Activated CD4-positive, alpha-beta memory T cell treated with anti-CD3 and anti-CD28 coated beads, Interleukin-2, amount 10 ng/mL, durations not matched to agents 7 days and 5 days (primary cell): ENCODE measurements at regions of chr18 and their contacts with region 1.

Region 1: GRCh38 chr18:58117786-58118403 is 73.9 kb downstream of the NEDD4L start:
- DNase-seq: no peak
- H3K4me3 Mint-ChIP-seq: no peak overlapping the region
- H3K27ac Mint-ChIP-seq: no peak overlapping the region
- H3K4me1 Mint-ChIP-seq: peaks cover 5% of the 10 kb centered on the region
- H3K27me3 Mint-ChIP-seq: peaks cover 2% of the 10 kb centered on the region

Region 2: DNA sequence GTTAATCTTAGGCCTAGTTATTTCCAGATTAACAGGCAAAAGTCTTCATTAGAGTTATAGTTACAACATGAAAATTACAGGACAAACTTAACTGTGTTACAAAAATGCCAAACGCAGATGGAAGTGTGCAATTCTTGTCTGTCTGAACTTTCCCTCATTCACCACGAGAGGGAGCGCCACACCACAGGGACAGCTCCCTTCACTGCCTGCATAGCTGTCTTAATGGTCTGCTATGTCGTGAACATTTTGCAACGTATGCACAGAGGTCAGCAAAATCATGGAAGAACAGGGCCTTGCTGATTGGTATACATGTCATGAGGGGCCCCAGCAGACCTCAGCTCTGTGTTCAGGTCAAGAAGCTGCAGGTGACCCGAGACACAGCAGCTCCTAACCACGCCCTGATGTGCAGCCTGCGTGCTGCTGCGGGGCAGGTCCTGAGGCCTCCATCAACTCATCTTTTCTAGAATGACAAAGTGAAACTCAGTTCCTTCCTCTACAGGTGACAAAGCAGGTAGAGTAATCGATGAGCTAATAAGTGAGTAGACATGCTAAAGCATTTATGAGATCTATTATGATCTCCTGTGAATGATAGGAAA is 236.0 kb before region 1 on chr18:
- CTCF ChIA-PET with region 1: interaction called, 27 read pairs
- POLR2A ChIA-PET with region 1: no interaction called
- DNase-seq: peak; percentile 52
- H3K4me3 Mint-ChIP-seq: no peak overlapping the region
- H3K27ac Mint-ChIP-seq: no peak overlapping the region
- H3K4me1 Mint-ChIP-seq: no peaks in the 10 kb centered on the region
- H3K27me3 Mint-ChIP-seq: peaks cover 3% of the 10 kb centered on the region

Region 3: GRCh38 chr18:57998461-57998860 is 119.4 kb before region 1 on chr18:
- CTCF ChIA-PET with region 1: no interaction called
- POLR2A ChIA-PET with region 1: no interaction called
- DNase-seq: no peak
- H3K4me3 Mint-ChIP-seq: no peak overlapping the region
- H3K27ac Mint-ChIP-seq: no peak overlapping the region
- H3K4me1 Mint-ChIP-seq: no peaks in the 10 kb centered on the region
- H3K27me3 Mint-ChIP-seq: peaks cover 5% of the 10 kb centered on the region

Region 4: DNA sequence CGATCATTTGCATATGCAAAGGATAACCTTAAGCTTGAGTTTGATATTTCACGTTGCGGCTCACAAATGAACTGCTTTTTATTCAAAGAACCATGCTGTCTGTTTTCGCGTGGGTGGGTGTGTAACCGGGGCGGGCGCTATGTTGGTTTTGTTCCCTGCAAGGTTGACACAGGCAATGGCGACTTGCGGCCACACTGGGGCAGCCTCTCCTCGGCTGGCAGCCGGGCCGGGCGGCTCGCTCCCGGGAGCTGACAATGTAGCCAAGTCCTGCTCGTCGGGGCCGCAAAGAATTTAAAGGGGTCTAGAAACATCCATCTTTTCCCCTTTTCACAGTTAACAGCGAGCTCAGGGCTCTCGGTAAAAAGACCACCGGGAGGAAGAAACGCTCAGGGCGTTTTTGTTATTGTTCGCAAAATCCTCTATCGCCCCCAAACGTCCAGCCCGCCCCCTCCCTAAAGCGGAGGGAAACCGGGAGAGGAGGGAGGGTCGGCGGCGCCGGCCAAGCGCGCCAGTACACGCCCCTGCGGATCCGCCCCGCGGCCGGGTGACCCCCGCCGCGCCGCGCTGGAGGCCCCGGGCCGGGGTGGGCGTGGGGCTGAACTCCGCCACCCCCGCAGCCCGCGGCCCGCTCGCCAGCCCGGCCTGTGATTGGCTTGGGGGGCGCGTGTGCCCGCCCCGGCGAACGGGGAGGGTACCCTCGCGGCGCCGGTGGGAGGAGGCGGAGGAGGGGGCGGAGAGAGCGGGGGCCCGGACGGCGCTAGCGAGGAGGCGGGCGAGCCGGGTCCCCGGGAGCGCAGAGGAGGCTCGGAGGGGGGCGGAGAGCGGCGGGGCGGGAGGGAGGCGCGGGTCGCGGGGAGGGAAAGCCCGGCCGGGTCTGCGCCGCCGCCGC is 74.2 kb before region 1 on chr18 and contains the start of gene NEDD4L:
- CTCF ChIA-PET with region 1: interaction called, 29 read pairs
- POLR2A ChIA-PET with region 1: interaction called, 3 read pairs
- DNase-seq: peak; percentile 78
- H3K4me3 Mint-ChIP-seq: peak within 1 kb of the TSS; percentile 85
- H3K27ac Mint-ChIP-seq: peak within 1 kb of the TSS; percentile 14
- H3K4me1 Mint-ChIP-seq: peaks cover 27% of the 10 kb centered on the region
- H3K27me3 Mint-ChIP-seq: peaks cover 40% of the 10 kb centered on the region
- total RNA-seq, gene NEDD4L: 4.6 to 5.8 TPM